Posterior vena cava (tissue), 2 donors: ENCODE measurements at regions of chr10 and their contacts with region 1.

Region 1: GRCh38 chr10:107847620-107848019 is 683.1 kb upstream of the SORCS1 start:
- DNase-seq: no peak

Region 2: GRCh38 chr10:107814865-107815487 is 32.6 kb before region 1 on chr10:
- intact Hi-C with region 1: no loop called
- DNase-seq: peak; percentile 47

Region 3: GRCh38 chr10:107894516-107894915 is 46.9 kb after region 1 on chr10:
- intact Hi-C with region 1: loop called in 1 of 2 experiments (anchors 2 kb)
- DNase-seq: no peak

Region 4: DNA sequence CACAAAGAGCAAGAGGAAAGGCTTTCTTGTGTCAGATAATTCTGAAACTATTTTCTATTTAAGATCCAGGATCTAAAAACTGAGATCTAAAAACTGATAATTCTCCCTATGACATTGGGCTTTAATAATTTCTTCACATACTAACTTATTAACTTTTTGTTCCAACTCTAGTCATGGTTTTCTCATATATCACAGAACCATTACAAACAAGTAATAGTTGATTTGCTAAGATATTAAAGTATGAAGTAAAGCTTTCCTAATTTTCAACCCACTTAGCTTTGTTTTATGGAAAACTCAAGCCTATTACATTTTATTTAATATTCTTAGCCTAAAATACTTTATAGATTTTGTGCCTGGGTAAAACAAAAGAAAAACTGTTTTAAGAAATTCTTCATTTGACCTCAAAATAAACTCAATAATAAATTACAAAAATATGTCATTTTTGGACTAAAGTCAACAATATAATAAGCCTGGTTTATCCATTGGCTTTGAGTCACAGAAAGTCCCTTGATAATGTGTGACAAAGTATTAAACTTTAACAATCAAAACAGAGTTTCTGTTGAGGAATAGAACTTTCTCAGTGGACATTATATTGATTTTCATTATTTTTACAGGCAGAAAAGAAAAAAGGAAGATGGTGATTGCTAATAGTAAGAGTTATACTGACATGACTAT is 459.8 kb after region 1 on chr10:
- intact Hi-C with region 1: no loop called
- DNase-seq: no peak